ENCODE measurements at regions of chr17 and their contacts with region 1.

Region 1: DNA sequence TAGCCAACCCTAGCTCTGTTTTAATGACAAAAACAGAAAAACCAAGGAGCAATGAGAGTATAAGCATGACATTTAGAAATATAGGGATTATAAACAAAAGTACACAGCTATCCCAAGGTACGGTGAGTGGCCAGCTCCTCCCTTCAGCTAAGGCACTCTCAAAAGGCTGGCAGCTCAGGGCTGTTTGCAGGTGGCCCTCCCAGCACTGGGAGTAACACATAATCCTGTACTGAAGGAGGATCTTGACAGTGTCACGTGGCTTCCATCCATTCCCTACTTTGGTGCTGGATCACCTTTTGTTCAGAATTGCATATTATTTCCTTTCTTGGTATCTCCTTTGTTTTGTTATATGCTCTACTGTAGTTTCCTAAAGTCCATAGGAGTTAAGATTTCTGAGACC is 500.8 kb downstream of the KCNJ18 start:
- DNase-seq: no peak
- ATAC-seq: no peak
- H3K4me3 Mint-ChIP-seq: no peak overlapping the region
- H3K27ac Mint-ChIP-seq: no peak overlapping the region
- H3K4me1 Mint-ChIP-seq: no peaks in the 10 kb centered on the region
- H3K27me3 Mint-ChIP-seq: no peaks in the 10 kb centered on the region

Region 2: GRCh38 chr17:22203208-22203715 is 10.1 kb after region 1 on chr17:
- CTCF ChIA-PET with region 1: no interaction called
- POLR2A ChIA-PET with region 1: no interaction called
- intact Hi-C with region 1: no loop called
- DNase-seq: no peak
- ATAC-seq: no peak
- H3K4me3 Mint-ChIP-seq: no peak overlapping the region
- H3K27ac Mint-ChIP-seq: no peak overlapping the region
- H3K4me1 Mint-ChIP-seq: no peaks in the 10 kb centered on the region
- H3K27me3 Mint-ChIP-seq: no peaks in the 10 kb centered on the region

Region 3: GRCh38 chr17:22221344-22221743 is 28.2 kb after region 1 on chr17:
- CTCF ChIA-PET with region 1: no interaction called
- POLR2A ChIA-PET with region 1: no interaction called
- intact Hi-C with region 1: loop called in 1 of 2 experiments (anchors 5 kb)
- DNase-seq: no peak
- ATAC-seq: no peak
- H3K4me3 Mint-ChIP-seq: no peak overlapping the region
- H3K27ac Mint-ChIP-seq: no peak overlapping the region
- H3K4me1 Mint-ChIP-seq: no peaks in the 10 kb centered on the region
- H3K27me3 Mint-ChIP-seq: no peaks in the 10 kb centered on the region

Measured in activated CD4-positive, alpha-beta T cell treated with anti-CD3 and anti-CD28 coated beads for 36 hours (primary cell).